Activated T-helper 1 cell treated with anti-CD3 and anti-CD28 coated beads, Interleukin-12 subunit alpha, Interleukin-12 subunit beta, Interleukin-2, Interleukin-4 antibody, amounts not matched to agents 30 ng/mL and 10 ng/mL and 1 ng/mL, durations not matched to agents 14 hours and 24 hours and 36 hours (primary cell): ENCODE measurements at regions of chr15 and their contacts with region 1.

Region 1: DNA sequence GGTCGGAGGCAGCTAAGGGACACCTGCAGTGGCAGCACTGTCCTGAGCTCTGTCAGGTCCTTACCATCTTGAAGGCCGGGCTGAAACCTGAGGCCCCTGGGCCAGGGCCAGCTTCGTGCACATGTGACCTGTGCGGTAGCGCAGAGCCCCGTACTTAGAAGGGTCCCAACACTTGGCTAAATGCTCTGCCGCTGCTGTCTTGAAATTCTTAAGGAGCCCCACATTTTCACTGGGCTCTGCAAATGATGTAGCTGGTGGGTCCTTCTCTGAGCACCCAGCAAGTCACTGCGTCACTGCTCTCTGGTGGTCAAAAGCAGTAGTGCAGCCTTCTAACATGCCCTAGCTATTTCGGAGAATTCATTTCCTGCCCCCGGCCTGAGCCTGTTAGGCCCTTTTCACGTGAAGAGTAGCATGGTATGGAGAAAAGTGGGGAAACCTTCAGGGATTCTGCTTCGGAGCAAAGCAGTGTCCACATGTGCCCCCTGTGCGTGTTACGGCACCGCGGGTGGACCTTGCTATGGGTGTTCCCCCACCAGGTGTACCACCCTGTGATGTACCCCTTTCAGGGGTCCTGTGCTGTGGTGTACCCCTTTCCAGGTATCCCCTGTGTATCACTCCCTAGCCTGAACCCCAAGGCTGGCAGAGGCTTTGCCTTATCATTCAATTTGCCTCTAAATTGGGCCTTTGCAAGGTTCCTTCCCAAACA is 79.7 kb downstream of the TMEM266 start:
- DNase-seq: peak; percentile 60
- H3K4me3 Mint-ChIP-seq: no peak overlapping the region
- H3K27ac Mint-ChIP-seq: no peak overlapping the region
- H3K4me1 Mint-ChIP-seq: no peaks in the 10 kb centered on the region
- H3K27me3 Mint-ChIP-seq: peaks cover 31% of the 10 kb centered on the region

Region 2: DNA sequence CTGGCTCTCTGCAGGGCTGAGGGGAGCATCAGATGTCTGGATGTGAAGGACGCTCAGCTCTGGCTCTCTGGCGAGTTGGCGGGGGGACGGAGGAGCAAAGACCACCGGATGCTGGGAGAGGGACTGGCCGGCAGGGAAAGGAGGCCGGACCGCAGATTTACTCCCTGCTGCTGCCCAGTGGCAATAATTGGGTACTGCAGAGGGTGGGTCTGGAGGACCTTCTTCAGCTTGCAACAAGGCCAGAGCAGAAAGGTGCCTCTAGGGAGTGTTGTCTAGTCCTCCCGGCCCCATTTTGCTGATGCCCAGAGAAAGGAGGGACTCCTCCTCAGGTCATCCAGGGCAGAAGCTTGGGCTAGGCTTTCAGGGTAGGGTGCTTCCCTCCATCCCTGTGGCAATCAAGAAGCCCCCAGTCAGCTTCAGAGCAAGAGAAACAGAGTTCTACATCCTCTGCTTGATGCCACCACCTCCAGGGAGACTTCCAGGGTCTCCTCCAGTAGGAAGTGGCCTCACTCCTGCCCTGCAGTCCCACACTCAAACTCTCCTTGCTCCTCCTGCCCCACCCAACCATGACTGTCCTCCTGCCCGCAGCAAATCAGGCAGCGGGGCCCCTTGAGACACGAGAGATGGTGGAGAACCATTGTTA is 406.6 kb before region 1 on chr15:
- intact Hi-C with region 1: loop called (anchors 1 kb)
- DNase-seq: peak; percentile 27
- H3K4me3 Mint-ChIP-seq: no peak overlapping the region
- H3K27ac Mint-ChIP-seq: no peak overlapping the region
- H3K4me1 Mint-ChIP-seq: peaks cover 5% of the 10 kb centered on the region
- H3K27me3 Mint-ChIP-seq: peaks cover 21% of the 10 kb centered on the region

Region 3: DNA sequence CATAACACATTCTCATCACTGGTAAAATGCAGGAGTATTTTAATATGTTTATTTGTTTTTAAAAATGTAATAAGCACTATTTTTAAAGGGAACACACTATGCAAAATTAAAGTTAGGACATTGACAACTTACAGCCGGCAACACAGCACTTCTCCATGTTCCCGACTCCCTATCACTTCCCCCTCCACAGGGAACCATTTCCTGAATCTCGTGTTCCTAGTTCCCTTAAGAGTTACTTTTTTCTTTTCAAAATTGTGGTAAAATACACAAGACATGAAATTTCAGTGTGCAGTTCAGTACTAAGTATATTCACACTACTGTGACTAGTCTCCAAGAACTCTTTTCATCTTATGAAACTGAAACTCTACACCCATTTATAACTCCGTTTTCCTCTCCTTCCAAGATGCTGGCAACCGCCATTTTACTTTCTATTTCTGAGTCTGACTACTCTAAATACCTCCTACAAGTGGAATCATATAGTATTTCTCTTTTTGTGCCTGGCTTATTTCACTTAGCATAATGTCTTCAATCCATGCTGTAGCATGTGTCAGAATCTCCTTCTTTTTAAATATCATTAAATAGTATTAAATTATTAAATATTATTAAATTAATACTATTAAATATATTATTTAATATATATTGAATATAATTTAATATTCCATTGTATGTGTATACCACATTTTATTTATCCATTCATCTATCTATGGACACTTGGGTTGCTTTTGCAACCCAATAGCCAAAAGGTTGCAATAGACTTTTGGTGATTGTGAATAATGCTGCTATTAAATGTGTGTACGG is 322.2 kb before region 1 on chr15:
- intact Hi-C with region 1: loop called (anchors 2 kb)
- DNase-seq: peak; percentile 15
- H3K4me3 Mint-ChIP-seq: peak overlapping the region; percentile 74
- H3K27ac Mint-ChIP-seq: peak overlapping the region; percentile 82
- H3K4me1 Mint-ChIP-seq: peaks cover 22% of the 10 kb centered on the region
- H3K27me3 Mint-ChIP-seq: no peaks in the 10 kb centered on the region

Region 4: DNA sequence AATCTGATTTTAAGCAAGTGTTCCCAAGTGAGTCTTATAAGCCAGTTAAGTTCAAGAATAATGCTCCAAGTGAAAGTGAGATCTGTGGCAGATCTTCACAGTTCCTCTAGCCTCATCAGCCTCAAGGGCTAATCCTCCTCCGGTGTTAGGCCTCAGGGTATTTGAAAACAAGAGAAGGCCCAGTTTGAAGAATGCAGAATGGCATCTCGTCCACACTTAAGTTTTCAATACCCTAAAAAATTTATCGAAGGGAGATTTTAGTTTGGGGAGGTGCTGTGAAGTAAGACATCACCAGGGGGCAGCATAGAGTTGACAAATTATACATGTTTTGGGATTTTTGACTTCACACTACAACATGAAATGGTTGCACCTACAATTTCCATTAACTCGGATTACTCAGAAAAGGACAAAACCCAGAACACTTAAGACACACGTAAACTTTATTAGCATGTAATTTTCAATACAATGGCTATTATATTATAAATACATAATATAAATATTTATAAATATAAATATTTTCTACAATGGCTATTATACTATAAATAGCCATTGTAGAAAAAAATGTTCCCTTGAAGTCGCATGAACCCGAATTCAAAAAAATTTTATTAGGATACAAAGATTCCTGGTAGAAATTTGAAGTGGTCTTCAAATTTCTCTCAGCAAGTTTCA is 82.1 kb before region 1 on chr15:
- intact Hi-C with region 1: loop called (anchors 1 kb)
- DNase-seq: no peak
- H3K4me3 Mint-ChIP-seq: no peak overlapping the region
- H3K27ac Mint-ChIP-seq: no peak overlapping the region
- H3K4me1 Mint-ChIP-seq: peaks cover 26% of the 10 kb centered on the region
- H3K27me3 Mint-ChIP-seq: peaks cover 52% of the 10 kb centered on the region

Region 5: DNA sequence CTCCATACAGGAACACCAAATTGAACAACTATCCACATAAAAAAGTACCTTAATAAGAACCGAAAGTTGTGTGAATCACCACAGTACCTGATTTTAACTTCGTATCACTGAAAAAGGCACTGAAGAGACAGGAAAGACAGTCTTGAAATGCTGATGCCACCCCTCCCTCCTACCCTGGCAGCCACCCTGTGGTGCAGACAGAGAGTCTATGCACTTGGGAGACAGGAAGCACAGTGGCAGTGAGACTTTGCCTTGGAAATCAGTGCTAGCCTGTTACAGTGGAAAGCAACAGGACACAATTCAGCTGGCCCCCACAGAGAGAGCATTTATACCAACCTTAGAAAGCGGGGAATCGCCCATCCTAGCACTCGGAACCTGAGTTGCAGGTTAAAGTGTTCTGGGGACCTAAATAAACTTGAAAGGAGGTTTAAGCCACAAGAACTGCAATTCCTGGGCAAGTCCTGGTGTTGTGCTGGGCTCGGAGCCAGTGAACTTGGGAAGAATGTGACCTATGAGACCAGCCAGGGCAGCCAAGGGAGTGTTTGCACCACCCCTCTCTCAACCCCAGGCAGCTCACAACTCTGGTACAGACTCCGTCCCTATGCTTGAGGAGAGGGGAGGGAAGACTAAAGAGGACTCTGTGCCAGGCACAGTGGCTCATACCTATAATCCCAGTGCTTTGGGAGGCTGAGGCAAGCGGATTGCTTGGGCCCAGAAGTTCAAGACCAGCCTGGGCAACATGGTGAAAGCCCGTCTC is 437.2 kb after region 1 on chr15:
- intact Hi-C with region 1: no loop called
- DNase-seq: no peak
- H3K4me3 Mint-ChIP-seq: no peak overlapping the region
- H3K27ac Mint-ChIP-seq: no peak overlapping the region
- H3K4me1 Mint-ChIP-seq: peaks cover 22% of the 10 kb centered on the region
- H3K27me3 Mint-ChIP-seq: no peaks in the 10 kb centered on the region